ENCODE measurements at regions of chr17 and their contacts with region 1.

Region 1: DNA sequence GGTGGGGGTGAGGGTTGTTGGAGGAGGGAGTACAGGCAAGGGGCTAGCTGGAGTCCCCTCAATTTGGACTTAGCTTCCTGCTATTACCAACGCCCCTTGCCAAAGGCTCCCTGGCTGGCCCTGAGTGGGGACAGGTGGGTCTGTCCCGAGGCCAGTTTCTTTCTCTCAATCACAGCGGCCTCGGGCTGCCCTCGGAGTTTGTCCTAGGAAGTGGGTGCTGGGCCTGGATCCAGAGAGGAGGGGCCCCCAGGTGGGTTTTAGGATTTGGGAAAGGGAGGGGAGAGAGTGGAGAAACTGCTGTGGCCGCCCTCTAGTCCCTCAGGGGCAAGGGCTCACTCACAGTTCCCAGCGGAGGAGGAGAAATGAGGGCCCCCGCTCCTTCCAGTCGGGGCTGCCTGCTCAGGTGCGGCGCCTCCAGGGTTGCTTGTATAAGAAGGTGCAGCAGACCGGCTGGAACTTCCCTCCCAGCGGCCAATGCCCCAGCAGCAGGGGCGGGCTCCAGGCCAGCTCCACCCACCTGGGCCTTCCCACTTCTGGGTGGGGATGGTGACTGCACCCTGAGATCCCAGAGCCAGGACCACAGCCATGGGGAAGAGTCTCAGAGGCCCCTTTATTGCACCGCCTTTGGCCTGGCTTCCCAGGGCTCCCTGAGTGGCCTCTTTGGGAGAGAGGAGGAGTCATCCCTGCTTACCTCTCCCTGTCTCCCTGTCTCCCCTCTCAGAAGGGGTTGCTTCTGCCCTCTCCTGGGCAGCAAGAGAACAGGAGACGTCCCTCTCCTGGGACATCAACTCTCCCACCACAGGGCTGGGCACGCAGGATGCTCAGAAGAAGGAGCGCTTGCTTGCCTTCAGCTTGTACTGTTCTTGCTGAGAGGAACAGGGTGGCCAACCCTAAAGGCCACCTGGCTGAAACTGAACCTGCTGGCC is 112.0 kb upstream of the SMURF2 start:
- DNase-seq: peak; percentile 91
- ATAC-seq: peak; percentile 85
- H3K4me3 ChIP-seq: peak overlapping the region; percentile 77 to 92 (median 88)
- H3K27ac ChIP-seq: peak overlapping the region; percentile 61
- H3K4me1 ChIP-seq: peaks cover 49% of the 10 kb centered on the region
- H3K27me3 ChIP-seq: no peaks in the 10 kb centered on the region
- CTCF ChIP-seq: peak; percentile 91
- EP300 ChIP-seq: no peak
- POLR2A ChIP-seq: peak; percentile 71 to 92; a peak in 3 of 4 replicates
- RAD21 ChIP-seq: peak; percentile 77

Region 2: DNA sequence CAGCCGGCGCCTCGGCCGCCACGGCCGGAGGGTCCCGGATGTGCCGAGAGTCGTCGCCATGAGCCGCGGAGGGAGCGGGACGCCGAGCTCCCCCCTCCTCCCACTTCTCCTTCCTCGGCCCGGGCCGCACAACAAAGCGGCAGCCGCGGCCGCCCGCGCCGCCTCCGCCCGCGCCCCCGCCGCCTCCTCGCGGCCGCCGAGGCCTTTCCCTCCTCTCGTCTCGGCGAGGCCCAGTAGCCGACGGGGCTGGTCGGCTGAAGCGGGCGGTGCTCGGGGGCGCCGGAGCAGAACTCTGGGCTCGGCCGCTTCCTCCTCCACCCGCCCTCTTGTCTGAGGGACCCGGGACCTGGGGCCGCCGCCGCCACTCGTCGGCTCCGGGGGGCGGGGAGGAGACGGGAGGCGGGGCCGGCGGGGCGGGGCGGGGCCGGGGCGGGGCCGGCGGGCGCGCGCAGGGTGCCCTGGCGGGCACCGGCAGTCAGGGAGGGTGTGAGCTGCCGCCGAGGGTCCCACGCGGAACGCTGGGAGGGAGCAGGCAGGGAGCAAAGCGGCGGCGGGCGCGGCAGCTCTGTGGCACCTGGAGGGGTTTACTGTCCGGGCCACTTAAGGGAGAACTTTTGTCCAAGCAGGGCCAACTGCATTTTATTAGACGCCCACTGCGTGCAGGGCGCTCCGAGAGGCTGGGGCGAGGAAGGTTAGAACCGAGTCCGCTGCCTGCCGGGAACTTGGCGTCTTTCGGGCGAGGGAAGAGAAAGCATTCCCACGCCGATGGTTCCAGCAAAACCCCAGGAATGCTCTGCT is 111.9 kb before region 1 on chr17 and contains the start of gene SMURF2:
- CTCF ChIA-PET with region 1: no interaction called
- POLR2A ChIA-PET with region 1: interaction called, 3 read pairs
- in situ Hi-C with region 1: no loop called
- intact Hi-C with region 1: loop called (anchors 5 kb)
- DNase-seq: peak; percentile 56
- ATAC-seq: peak; percentile 79
- H3K4me3 ChIP-seq: peak within 1 kb of the TSS; percentile 87 to 94 (median 90)
- H3K27ac ChIP-seq: peak within 1 kb of the TSS; percentile 70
- H3K4me1 ChIP-seq: peaks cover 49% of the 10 kb centered on the region
- H3K27me3 ChIP-seq: no peaks in the 10 kb centered on the region
- CTCF ChIP-seq: no peak
- EP300 ChIP-seq: no peak
- POLR2A ChIP-seq: peak; percentile 82 to 91
- RAD21 ChIP-seq: peak; percentile 32
- total RNA-seq, gene SMURF2: 24.3 and 29.3 TPM in 2 replicates

Region 3: GRCh38 chr17:64786337-64786736 is 12.2 kb after region 1 on chr17:
- CTCF ChIA-PET with region 1: no interaction called
- POLR2A ChIA-PET with region 1: interaction called, 16 read pairs
- in situ Hi-C with region 1: no loop called
- intact Hi-C with region 1: no loop called
- DNase-seq: no peak
- ATAC-seq: no peak
- H3K4me3 ChIP-seq: no peak overlapping the region
- H3K27ac ChIP-seq: no peak overlapping the region
- H3K4me1 ChIP-seq: peaks cover 21% of the 10 kb centered on the region
- H3K27me3 ChIP-seq: no peaks in the 10 kb centered on the region
- CTCF ChIP-seq: no peak
- EP300 ChIP-seq: no peak
- POLR2A ChIP-seq: no peak
- RAD21 ChIP-seq: no peak

Measured in HepG2 (cell line).